ENCODE measurements at regions of chr7 and their contacts with region 1.

Region 1: GRCh38 chr7:33459340-33459751 is 330.0 kb downstream of the BBS9 start:
- DNase-seq: peak; percentile 23
- H3K4me3 ChIP-seq: no peak overlapping the region
- CTCF ChIP-seq: peak; percentile 61

Region 2: DNA sequence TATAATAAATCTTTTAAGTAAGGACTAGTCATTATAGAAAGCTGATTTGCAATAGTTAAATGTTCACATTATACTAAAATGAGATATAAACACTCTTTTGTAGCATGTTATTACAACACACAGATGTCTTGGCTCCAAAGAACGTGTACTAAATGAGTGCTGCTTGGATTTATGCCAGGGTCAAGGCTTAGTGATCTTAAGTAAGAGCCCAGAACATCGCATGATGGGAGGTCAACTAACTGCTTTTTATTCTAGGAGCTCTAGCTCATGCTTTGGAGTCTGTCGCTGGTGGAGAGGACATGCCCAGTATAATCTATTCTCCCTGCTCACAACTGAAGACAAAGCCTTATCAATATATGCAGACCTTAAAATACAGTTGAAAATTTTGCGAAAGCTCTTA is 14.8 kb before region 1 on chr7:
- CTCF ChIA-PET with region 1: interaction called, 10 read pairs
- POLR2A ChIA-PET with region 1: no interaction called
- DNase-seq: no peak
- H3K4me3 ChIP-seq: no peak overlapping the region
- CTCF ChIP-seq: no peak

Region 3: DNA sequence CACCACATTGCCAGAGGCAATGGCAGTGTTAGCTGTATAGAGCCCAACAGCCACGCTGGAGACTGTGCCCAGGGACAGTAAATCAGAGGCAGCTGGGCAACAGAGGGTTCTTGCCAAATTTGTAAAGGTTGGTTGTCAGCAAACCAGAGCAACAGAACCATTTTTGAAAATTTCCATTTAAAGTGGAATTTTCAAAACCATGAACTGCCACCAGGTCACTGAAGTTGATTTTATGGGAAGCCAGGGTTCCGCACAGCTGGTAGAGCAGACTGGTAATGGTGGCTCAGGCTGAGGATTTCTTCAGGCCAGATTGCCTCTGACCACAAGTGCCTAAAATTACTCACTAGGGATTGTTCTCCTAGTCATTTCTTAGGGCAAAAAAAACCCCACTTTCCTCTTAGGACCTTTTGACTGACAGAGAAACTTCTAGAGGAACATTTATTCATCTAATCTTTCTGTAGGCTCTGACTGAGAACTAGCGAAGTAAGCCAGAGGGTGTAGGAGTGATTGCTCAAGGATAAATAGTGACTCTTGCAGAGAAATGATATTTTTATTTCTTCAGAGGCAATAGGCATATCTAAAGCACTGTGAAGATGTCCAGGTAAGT is 12.4 kb after region 1 on chr7:
- CTCF ChIA-PET with region 1: interaction called, 17 read pairs
- POLR2A ChIA-PET with region 1: no interaction called
- DNase-seq: no peak
- H3K4me3 ChIP-seq: no peak overlapping the region
- CTCF ChIP-seq: no peak

Region 4: GRCh38 chr7:33716581-33717477 is 257.5 kb after region 1 on chr7:
- CTCF ChIA-PET with region 1: interaction called, 12 read pairs
- POLR2A ChIA-PET with region 1: no interaction called
- DNase-seq: no peak
- H3K4me3 ChIP-seq: no peak overlapping the region
- CTCF ChIP-seq: peak; percentile 48